Activated CD4-positive, alpha-beta T cell treated with anti-CD3 and anti-CD28 coated beads for 36 hours (primary cell): ENCODE measurements at regions of chr19 and their contacts with region 1.

Region 1: GRCh38 chr19:29761575-29762232 is 46.6 kb upstream of the C19orf12 start:
- DNase-seq: no peak
- ATAC-seq: no peak
- H3K4me3 Mint-ChIP-seq: no peak overlapping the region
- H3K27ac Mint-ChIP-seq: no peak overlapping the region
- H3K4me1 Mint-ChIP-seq: no peaks in the 10 kb centered on the region
- H3K27me3 Mint-ChIP-seq: peaks cover 1% of the 10 kb centered on the region

Region 2: GRCh38 chr19:29630665-29631064 is 131.0 kb before region 1 on chr19:
- CTCF ChIA-PET with region 1: no interaction called
- POLR2A ChIA-PET with region 1: no interaction called
- intact Hi-C with region 1: no loop called
- DNase-seq: no peak
- ATAC-seq: no peak
- H3K4me3 Mint-ChIP-seq: no peak overlapping the region
- H3K27ac Mint-ChIP-seq: no peak overlapping the region
- H3K4me1 Mint-ChIP-seq: no peaks in the 10 kb centered on the region
- H3K27me3 Mint-ChIP-seq: no peaks in the 10 kb centered on the region

Region 3: GRCh38 chr19:29694669-29695627 is 66.8 kb before region 1 on chr19:
- CTCF ChIA-PET with region 1: no interaction called
- POLR2A ChIA-PET with region 1: no interaction called
- intact Hi-C with region 1: loop called in 1 of 2 experiments (anchors 2 kb)
- DNase-seq: peak; percentile 92
- ATAC-seq: peak; percentile 97
- H3K4me3 Mint-ChIP-seq: no peak overlapping the region
- H3K27ac Mint-ChIP-seq: peak overlapping the region; percentile 53
- H3K4me1 Mint-ChIP-seq: peaks cover 12% of the 10 kb centered on the region
- H3K27me3 Mint-ChIP-seq: no peaks in the 10 kb centered on the region

Region 4: DNA sequence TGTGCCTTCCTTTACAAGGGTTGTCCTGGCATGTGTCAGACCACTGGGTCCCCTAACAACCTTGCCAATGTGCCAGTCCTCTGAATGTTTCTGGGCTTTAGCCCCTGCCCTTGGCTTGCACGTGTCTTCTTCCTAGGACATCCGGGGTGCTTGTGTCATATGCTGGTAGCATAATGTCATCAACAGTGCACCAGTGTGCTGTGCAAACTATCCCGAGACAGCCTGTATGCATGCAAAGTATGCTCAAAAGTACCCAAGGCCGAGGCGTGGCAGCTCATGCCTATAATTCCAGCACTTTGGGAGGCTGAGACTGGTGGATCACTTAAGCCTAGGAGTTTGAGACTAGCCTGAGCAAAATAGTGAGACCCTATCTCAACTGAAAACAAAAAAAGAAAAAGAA is 25.9 kb before region 1 on chr19:
- CTCF ChIA-PET with region 1: interaction called, 14 read pairs
- POLR2A ChIA-PET with region 1: no interaction called
- intact Hi-C with region 1: loop called in 1 of 2 experiments (anchors 1 kb)
- DNase-seq: no peak
- ATAC-seq: no peak
- H3K4me3 Mint-ChIP-seq: no peak overlapping the region
- H3K27ac Mint-ChIP-seq: no peak overlapping the region
- H3K4me1 Mint-ChIP-seq: no peaks in the 10 kb centered on the region
- H3K27me3 Mint-ChIP-seq: peaks cover 4% of the 10 kb centered on the region

Region 5: GRCh38 chr19:29771708-29772414 is 10.2 kb after region 1 on chr19:
- CTCF ChIA-PET with region 1: interaction called, 19 read pairs
- POLR2A ChIA-PET with region 1: no interaction called
- intact Hi-C with region 1: no loop called
- DNase-seq: peak; percentile 56
- ATAC-seq: peak; percentile 53
- H3K4me3 Mint-ChIP-seq: no peak overlapping the region
- H3K27ac Mint-ChIP-seq: no peak overlapping the region
- H3K4me1 Mint-ChIP-seq: no peaks in the 10 kb centered on the region
- H3K27me3 Mint-ChIP-seq: no peaks in the 10 kb centered on the region

Region 6: GRCh38 chr19:30046522-30046921 is 284.8 kb after region 1 on chr19:
- CTCF ChIA-PET with region 1: no interaction called
- POLR2A ChIA-PET with region 1: no interaction called
- intact Hi-C with region 1: no loop called
- DNase-seq: peak; percentile 19
- ATAC-seq: peak; percentile 66
- H3K4me3 Mint-ChIP-seq: no peak overlapping the region
- H3K27ac Mint-ChIP-seq: no peak overlapping the region
- H3K4me1 Mint-ChIP-seq: peaks cover 2% of the 10 kb centered on the region
- H3K27me3 Mint-ChIP-seq: no peaks in the 10 kb centered on the region